Colonic mucosa (tissue), 4 donors: ENCODE measurements at regions of chr20 and their contacts with region 1.

Region 1: GRCh38 chr20:21808863-21809664 is 103.6 kb downstream of the PAX1 start:
- DNase-seq: peak; percentile 41
- H3K4me3 ChIP-seq: no peak overlapping the region
- H3K27ac ChIP-seq: no peak overlapping the region
- H3K4me1 ChIP-seq: no peaks in the 10 kb centered on the region
- H3K27me3 ChIP-seq: no peaks in the 10 kb centered on the region
- CTCF ChIP-seq: peak; percentile 76

Region 2: DNA sequence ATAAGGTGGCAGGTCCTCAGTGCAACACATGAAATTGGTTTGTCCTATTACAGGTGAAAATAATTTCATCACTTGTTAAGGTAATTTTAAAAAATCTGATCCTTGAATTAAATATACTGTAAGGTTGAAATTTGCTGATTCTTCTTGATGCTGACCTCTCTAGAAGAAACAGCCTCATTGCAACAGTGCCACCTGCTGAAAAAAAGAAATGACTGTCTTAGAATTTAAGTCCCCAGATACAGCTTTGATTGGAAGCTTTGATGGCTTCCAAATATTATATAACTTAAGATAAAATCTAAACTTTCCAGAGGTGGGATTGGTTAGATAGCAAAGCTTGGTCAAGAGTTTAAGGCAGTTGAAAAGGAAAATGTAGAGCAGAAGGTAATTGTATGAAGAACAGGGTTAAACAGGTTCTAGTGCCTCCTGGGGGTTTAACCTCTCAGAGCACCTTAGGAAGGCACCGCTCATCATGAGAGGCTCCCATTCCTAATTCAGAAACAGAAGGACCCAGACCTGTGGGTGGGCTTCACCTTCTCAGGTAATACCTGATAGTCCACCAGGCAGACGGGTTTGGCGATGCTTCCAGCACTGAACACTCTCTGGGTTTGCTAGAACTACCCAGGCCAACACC is 297.4 kb after region 1 on chr20:
- intact Hi-C with region 1: loop called (anchors 10 kb)
- DNase-seq: no peak
- H3K4me3 ChIP-seq: no peak overlapping the region
- H3K27ac ChIP-seq: no peak overlapping the region
- H3K4me1 ChIP-seq: no peaks in the 10 kb centered on the region
- H3K27me3 ChIP-seq: no peaks in the 10 kb centered on the region
- CTCF ChIP-seq: no peak

Region 3: GRCh38 chr20:22248051-22248667 is 439.1 kb after region 1 on chr20:
- intact Hi-C with region 1: loop called (anchors 2 kb)
- DNase-seq: no peak
- H3K4me3 ChIP-seq: no peak overlapping the region
- H3K27ac ChIP-seq: no peak overlapping the region
- H3K4me1 ChIP-seq: no peaks in the 10 kb centered on the region
- H3K27me3 ChIP-seq: no peaks in the 10 kb centered on the region
- CTCF ChIP-seq: no peak

Region 4: GRCh38 chr20:22312744-22313346 is 503.8 kb after region 1 on chr20:
- intact Hi-C with region 1: loop called (anchors 5 kb)
- DNase-seq: peak; percentile 24
- H3K4me3 ChIP-seq: no peak overlapping the region
- H3K27ac ChIP-seq: no peak overlapping the region
- H3K4me1 ChIP-seq: no peaks in the 10 kb centered on the region
- H3K27me3 ChIP-seq: no peaks in the 10 kb centered on the region
- CTCF ChIP-seq: peak; percentile 54